ENCODE measurements at regions of chr10 and their contacts with region 1.

Region 1: GRCh38 chr10:72273410-72274212 is at the start of gene DDIT4:
- DNase-seq: peak; percentile 98
- H3K4me3 ChIP-seq: peak within 1 kb of the TSS; percentile 88 to 94 (median 93)
- H3K27ac ChIP-seq: peak within 1 kb of the TSS; percentile 85
- H3K4me1 ChIP-seq: peaks cover 0 to 19% (median 15%) of the 10 kb centered on the region in 4 experiments; a peak in 6 of 7 replicates
- H3K27me3 ChIP-seq: no peaks in the 10 kb centered on the region
- CTCF ChIP-seq: no peak
- EP300 ChIP-seq: 0 out of 3 replicates have a peak, but pooled peaks of 1 of the 2 experiments have one; percentile 42
- POLR2A ChIP-seq: peak; percentile 100
- RAD21 ChIP-seq: no peak
- total RNA-seq, gene DDIT4: 42.1 and 47.4 TPM in 2 replicates

Region 2: DNA sequence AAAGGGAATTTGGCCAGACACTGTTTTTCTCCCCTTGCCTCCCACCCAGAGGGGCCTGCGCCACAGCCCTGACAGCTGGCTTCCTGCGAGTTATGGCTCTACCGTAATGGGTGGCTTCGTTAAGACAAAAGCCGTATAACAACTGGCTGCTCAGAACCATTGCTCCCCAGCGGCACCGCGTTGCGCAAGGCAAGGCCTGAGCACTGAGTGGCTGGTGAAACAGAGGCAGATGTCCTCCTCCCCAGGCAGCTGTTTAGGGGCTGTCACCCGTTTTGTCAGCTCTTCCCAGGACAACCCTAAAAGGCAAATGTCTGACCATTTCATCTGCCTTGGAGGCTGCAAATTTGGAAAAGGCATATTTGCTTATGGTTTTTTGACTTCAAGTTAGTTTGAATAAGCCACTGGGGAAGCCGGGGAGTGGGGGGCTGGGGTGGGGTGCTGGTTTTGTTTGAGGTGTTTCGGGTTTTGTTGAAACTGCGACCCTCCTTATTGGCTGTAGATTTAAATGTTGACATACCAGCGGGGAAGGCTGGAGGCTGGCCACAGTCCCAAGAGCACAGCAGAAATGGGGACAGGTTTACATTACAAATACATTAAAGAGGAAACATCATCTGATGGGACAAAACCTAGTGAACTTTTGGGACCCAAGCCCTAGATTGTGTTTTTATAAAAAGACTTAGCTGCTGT is 184.6 kb before region 1 on chr10:
- CTCF ChIA-PET with region 1: no interaction called
- POLR2A ChIA-PET with region 1: interaction called, 13 read pairs
- DNase-seq: peak in 1 of 2 experiments; percentile 62
- H3K4me3 ChIP-seq: peak overlapping the region; percentile 49 to 60 (median 54); a peak in 5 of 8 replicates
- H3K27ac ChIP-seq: no peak overlapping the region
- H3K4me1 ChIP-seq: peaks cover 3 to 22% (median 11%) of the 10 kb centered on the region in 4 experiments
- H3K27me3 ChIP-seq: peaks cover 19 to 50% (median 45%) of the 10 kb centered on the region in 4 experiments
- CTCF ChIP-seq: no peak
- EP300 ChIP-seq: no peak
- POLR2A ChIP-seq: no peak
- RAD21 ChIP-seq: no peak

Region 3: GRCh38 chr10:72223743-72224101 is 49.9 kb before region 1 on chr10:
- CTCF ChIA-PET with region 1: interaction called, 18 read pairs
- POLR2A ChIA-PET with region 1: interaction called, 25 read pairs
- DNase-seq: no peak
- H3K4me3 ChIP-seq: no peak overlapping the region
- H3K27ac ChIP-seq: no peak overlapping the region
- H3K4me1 ChIP-seq: peaks cover 0 to 2% (median under 1%) of the 10 kb centered on the region in 4 experiments; a peak in 2 of 7 replicates
- H3K27me3 ChIP-seq: no peaks in the 10 kb centered on the region
- CTCF ChIP-seq: no peak
- EP300 ChIP-seq: no peak
- POLR2A ChIP-seq: no peak
- RAD21 ChIP-seq: no peak

Region 4: DNA sequence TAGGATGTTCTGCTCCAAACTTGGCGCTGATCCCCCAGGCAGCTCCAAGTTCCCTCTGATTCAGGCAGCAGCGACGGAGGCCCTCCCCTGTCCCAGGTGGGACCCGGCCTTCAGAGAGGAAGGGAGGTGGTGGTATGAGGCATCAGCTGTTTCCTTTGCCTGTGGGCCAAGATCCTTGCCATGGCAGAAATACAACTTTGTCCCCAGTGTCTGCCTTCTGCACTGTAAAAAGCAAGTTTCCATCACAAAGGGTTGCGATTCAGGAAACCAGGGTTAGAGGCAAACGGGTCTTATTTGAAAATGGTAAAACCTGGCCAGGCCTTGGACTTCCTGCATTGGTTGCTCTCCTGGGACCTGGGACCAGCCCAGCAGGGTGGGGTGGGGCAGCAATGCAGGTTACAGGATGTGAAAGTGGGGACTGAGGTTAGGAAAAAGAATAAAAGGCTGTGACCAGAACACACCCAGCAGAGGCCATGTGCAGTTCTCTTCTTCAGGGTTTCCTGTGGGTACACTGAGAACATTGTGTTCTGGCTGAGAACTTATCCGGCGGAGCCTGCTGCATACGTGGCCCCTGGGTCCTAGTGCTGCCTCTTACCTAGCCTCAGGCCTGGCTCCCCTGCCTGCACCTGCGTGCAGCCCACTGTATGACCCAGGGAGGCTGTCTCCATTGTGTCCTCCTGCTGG is 25.0 kb before region 1 on chr10:
- CTCF ChIA-PET with region 1: interaction called, 9 read pairs
- POLR2A ChIA-PET with region 1: interaction called, 673 read pairs
- DNase-seq: peak in 1 of 2 experiments; percentile 61
- H3K4me3 ChIP-seq: peak overlapping the region in 1 of 4 experiments; percentile 27; a peak in 2 of 8 replicates
- H3K27ac ChIP-seq: no peak overlapping the region; the same call in 1 of the 2 replicates
- H3K4me1 ChIP-seq: peaks cover 8 to 14% (median 12%) of the 10 kb centered on the region in 4 experiments
- H3K27me3 ChIP-seq: no peaks in the 10 kb centered on the region; a peak in 1 of 7 replicates
- CTCF ChIP-seq: no peak
- EP300 ChIP-seq: no peak
- POLR2A ChIP-seq: peak in 1 of 2 experiments; percentile 61; a peak in 1 of 3 replicates
- RAD21 ChIP-seq: no peak

Region 5: GRCh38 chr10:72285972-72286521 is 12.4 kb after region 1 on chr10:
- CTCF ChIA-PET with region 1: interaction called, 30 read pairs
- POLR2A ChIA-PET with region 1: interaction called, 205 read pairs
- DNase-seq: no peak
- H3K4me3 ChIP-seq: no peak overlapping the region
- H3K27ac ChIP-seq: no peak overlapping the region
- H3K4me1 ChIP-seq: peaks cover 0 to 3% (median under 1%) of the 10 kb centered on the region in 4 experiments; a peak in 3 of 7 replicates
- H3K27me3 ChIP-seq: no peaks in the 10 kb centered on the region
- CTCF ChIP-seq: no peak
- EP300 ChIP-seq: no peak
- POLR2A ChIP-seq: no peak
- RAD21 ChIP-seq: no peak

Region 6: GRCh38 chr10:72319416-72320254 is 46.0 kb after region 1 on chr10:
- CTCF ChIA-PET with region 1: interaction called, 33 read pairs
- POLR2A ChIA-PET with region 1: interaction called, 895 read pairs
- DNase-seq: peak in 1 of 2 experiments; percentile 83
- H3K4me3 ChIP-seq: peak overlapping the region; percentile 14 to 55 (median 22); a peak in 5 of 8 replicates
- H3K27ac ChIP-seq: no peak overlapping the region
- H3K4me1 ChIP-seq: peaks cover 17 to 39% (median 26%) of the 10 kb centered on the region in 4 experiments
- H3K27me3 ChIP-seq: no peaks in the 10 kb centered on the region
- CTCF ChIP-seq: no peak
- EP300 ChIP-seq: peak in 1 of 2 experiments; percentile 56; a peak in 1 of 3 replicates
- POLR2A ChIP-seq: no peak; a peak in 1 of 3 replicates
- RAD21 ChIP-seq: no peak; a peak in 1 of 4 replicates

Region 7: GRCh38 chr10:72354478-72355213 is 81.0 kb after region 1 on chr10 and contains the start of gene DNAJB12:
- CTCF ChIA-PET with region 1: interaction called, 3 read pairs
- POLR2A ChIA-PET with region 1: interaction called, 11 read pairs
- DNase-seq: peak; percentile 86 to 96
- H3K4me3 ChIP-seq: peak within 1 kb of the TSS; percentile 86 to 100 (median 92)
- H3K27ac ChIP-seq: peak within 1 kb of the TSS; percentile 98
- H3K4me1 ChIP-seq: peaks cover 5 to 7% (median 6%) of the 10 kb centered on the region in 4 experiments; a peak in 6 of 7 replicates
- H3K27me3 ChIP-seq: no peaks in the 10 kb centered on the region
- CTCF ChIP-seq: no peak
- EP300 ChIP-seq: no peak; a peak in 1 of 3 replicates
- POLR2A ChIP-seq: peak; percentile 87 to 95
- RAD21 ChIP-seq: 0 out of 4 replicates have a peak, but pooled peaks of 1 of the 2 experiments have one; percentile 2
- total RNA-seq, gene DNAJB12: 19.6 and 20.5 TPM in 2 replicates

Region 8: GRCh38 chr10:72375585-72375984 is 102.0 kb after region 1 on chr10:
- CTCF ChIA-PET with region 1: no interaction called
- POLR2A ChIA-PET with region 1: no interaction called
- DNase-seq: no peak
- H3K4me3 ChIP-seq: no peak overlapping the region
- H3K27ac ChIP-seq: no peak overlapping the region
- H3K4me1 ChIP-seq: no peaks in the 10 kb centered on the region
- H3K27me3 ChIP-seq: no peaks in the 10 kb centered on the region
- CTCF ChIP-seq: peak; percentile 44 to 57 (median 47)
- EP300 ChIP-seq: no peak
- POLR2A ChIP-seq: no peak
- RAD21 ChIP-seq: peak; percentile 71 to 77

Region 9: DNA sequence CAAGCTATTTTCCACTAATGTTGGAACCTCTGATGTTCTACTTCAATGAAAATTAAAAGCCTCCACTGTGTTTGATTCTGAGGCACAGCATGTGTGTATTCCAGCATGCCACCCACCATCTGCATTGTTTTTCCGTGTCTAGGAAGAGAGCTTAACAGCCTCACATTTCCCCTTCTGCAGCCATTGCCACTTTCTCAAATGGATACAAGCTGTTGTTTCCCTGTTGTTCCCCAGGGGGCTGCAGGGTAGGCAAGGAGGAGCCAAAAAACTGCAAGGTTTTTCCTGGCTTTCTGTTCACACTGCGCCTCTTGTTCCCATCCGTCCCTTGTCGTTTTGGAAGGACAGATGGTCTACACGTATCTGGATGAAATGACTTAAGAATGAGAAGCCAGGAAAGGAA is 153.4 kb after region 1 on chr10:
- CTCF ChIA-PET with region 1: no interaction called
- POLR2A ChIA-PET with region 1: no interaction called
- DNase-seq: no peak
- H3K4me3 ChIP-seq: no peak overlapping the region
- H3K27ac ChIP-seq: no peak overlapping the region
- H3K4me1 ChIP-seq: peaks cover 0 to 3% (median 2%) of the 10 kb centered on the region in 4 experiments; a peak in 2 of 7 replicates
- H3K27me3 ChIP-seq: no peaks in the 10 kb centered on the region
- CTCF ChIP-seq: peak; percentile 6 to 38 (median 28); a peak in 3 of 4 replicates
- EP300 ChIP-seq: no peak
- POLR2A ChIP-seq: no peak
- RAD21 ChIP-seq: peak; percentile 33 to 41; a peak in 2 of 4 replicates

Measured in H1 (cell line).